CD4-positive, alpha-beta T cell (primary cell): ENCODE measurements at regions of chr1 and their contacts with region 1.

Region 1: DNA sequence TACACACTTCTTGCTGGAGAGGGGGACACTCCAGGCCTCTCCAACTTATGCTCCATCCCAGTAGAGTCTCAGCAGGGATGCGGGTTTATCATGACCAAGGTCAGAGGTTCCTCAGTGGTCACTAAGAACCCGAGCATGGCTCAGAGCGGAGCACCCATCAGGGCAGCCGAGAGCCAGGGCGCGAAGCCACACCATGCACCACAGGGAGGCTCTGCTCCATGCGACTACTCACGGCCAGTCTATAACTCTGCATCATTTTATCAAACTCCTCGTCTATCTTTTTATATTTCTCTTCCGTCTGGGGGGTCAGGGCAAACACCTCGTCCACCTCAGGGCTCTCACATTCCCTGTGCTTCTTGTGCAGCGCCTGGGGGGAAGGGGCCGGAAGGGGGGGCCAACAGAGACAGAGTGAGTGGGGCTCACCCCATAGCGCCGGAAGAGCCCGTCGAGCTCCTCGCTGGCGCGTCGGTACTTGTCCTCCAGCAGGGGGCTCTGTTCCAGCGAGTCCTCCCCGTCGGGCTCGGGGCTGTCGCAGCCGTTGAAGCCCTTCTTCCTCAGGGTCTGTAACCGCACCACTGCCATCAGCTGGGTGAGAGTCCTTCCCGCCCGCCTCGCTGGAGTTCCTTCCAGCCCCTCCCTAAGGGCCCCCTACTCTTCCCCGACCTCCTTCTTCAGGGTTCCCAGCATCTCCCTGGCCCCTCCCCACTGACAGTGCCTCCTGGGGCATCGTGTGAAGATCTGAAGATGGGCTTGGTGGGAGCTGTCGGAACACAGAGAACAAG is 20.0 kb downstream of the MEF2D start:
- DNase-seq: peak; percentile 67 to 89 (median 77)
- ATAC-seq: peak; percentile 86
- H3K4me3 ChIP-seq: no peak overlapping the region
- H3K4me3 Mint-ChIP-seq: peak overlapping the region; percentile 42
- H3K27ac ChIP-seq: peak overlapping the region; percentile 52 to 62
- H3K27ac Mint-ChIP-seq: peak overlapping the region; percentile 94
- H3K4me1 ChIP-seq: peaks cover 47% of the 10 kb centered on the region
- H3K4me1 Mint-ChIP-seq: peaks cover 53% of the 10 kb centered on the region
- H3K27me3 ChIP-seq: no peaks in the 10 kb centered on the region
- H3K27me3 Mint-ChIP-seq: no peaks in the 10 kb centered on the region
- CTCF ChIP-seq: peak; percentile 75

Region 2: GRCh38 chr1:156282479-156283222 is 198.0 kb before region 1 on chr1 and contains the start of gene SMG5:
- CTCF ChIA-PET with region 1: no interaction called
- POLR2A ChIA-PET with region 1: no interaction called
- intact Hi-C with region 1: no loop called
- DNase-seq: peak; percentile 90 to 99 (median 94)
- ATAC-seq: peak; percentile 94
- H3K4me3 ChIP-seq: peak within 1 kb of the TSS; percentile 79
- H3K4me3 Mint-ChIP-seq: peak within 1 kb of the TSS; percentile 97
- H3K27ac ChIP-seq: peak within 1 kb of the TSS; percentile 82
- H3K27ac Mint-ChIP-seq: peak within 1 kb of the TSS; percentile 86
- H3K4me1 ChIP-seq: peaks cover 36% of the 10 kb centered on the region
- H3K4me1 Mint-ChIP-seq: peaks cover 47% of the 10 kb centered on the region
- H3K27me3 ChIP-seq: no peaks in the 10 kb centered on the region
- H3K27me3 Mint-ChIP-seq: no peaks in the 10 kb centered on the region
- CTCF ChIP-seq: no peak
- total RNA-seq, gene SMG5: 51.6 to 56.1 TPM

Region 3: GRCh38 chr1:156407344-156407743 is 73.3 kb before region 1 on chr1:
- CTCF ChIA-PET with region 1: no interaction called
- POLR2A ChIA-PET with region 1: no interaction called
- intact Hi-C with region 1: no loop called
- DNase-seq: no peak
- ATAC-seq: no peak
- H3K4me3 ChIP-seq: no peak overlapping the region
- H3K4me3 Mint-ChIP-seq: no peak overlapping the region
- H3K27ac ChIP-seq: no peak overlapping the region
- H3K27ac Mint-ChIP-seq: no peak overlapping the region
- H3K4me1 ChIP-seq: no peaks in the 10 kb centered on the region
- H3K4me1 Mint-ChIP-seq: no peaks in the 10 kb centered on the region
- H3K27me3 ChIP-seq: peaks cover 12 to 38% of the 10 kb centered on the region in 2 experiments
- H3K27me3 Mint-ChIP-seq: peaks cover 86% of the 10 kb centered on the region
- CTCF ChIP-seq: no peak

Region 4: GRCh38 chr1:156456622-156457465 is 23.8 kb before region 1 on chr1:
- CTCF ChIA-PET with region 1: interaction called, 24 read pairs
- POLR2A ChIA-PET with region 1: interaction called, 11 read pairs
- intact Hi-C with region 1: loop called in 1 of 2 experiments (anchors 2 kb)
- DNase-seq: peak; percentile 93 to 99 (median 96)
- ATAC-seq: peak; percentile 80
- H3K4me3 ChIP-seq: peak overlapping the region; percentile 56
- H3K4me3 Mint-ChIP-seq: peak overlapping the region; percentile 94
- H3K27ac ChIP-seq: peak overlapping the region; percentile 93 to 100
- H3K27ac Mint-ChIP-seq: peak overlapping the region; percentile 100
- H3K4me1 ChIP-seq: peaks cover 19% of the 10 kb centered on the region
- H3K4me1 Mint-ChIP-seq: peaks cover 25% of the 10 kb centered on the region
- H3K27me3 ChIP-seq: no peaks in the 10 kb centered on the region
- H3K27me3 Mint-ChIP-seq: no peaks in the 10 kb centered on the region
- CTCF ChIP-seq: no peak

Region 5: GRCh38 chr1:156524481-156524869 is 43.9 kb after region 1 on chr1:
- CTCF ChIA-PET with region 1: interaction called, 21 read pairs
- POLR2A ChIA-PET with region 1: interaction called, 4 read pairs
- intact Hi-C with region 1: no loop called
- DNase-seq: peak in 3 of 14 experiments; percentile 47 to 53 (median 49)
- ATAC-seq: peak; percentile 71
- H3K4me3 ChIP-seq: no peak overlapping the region
- H3K4me3 Mint-ChIP-seq: peak overlapping the region; percentile 62
- H3K27ac ChIP-seq: no peak overlapping the region
- H3K27ac Mint-ChIP-seq: peak overlapping the region; percentile 6
- H3K4me1 ChIP-seq: peaks cover 33% of the 10 kb centered on the region
- H3K4me1 Mint-ChIP-seq: peaks cover 38% of the 10 kb centered on the region
- H3K27me3 ChIP-seq: no peaks in the 10 kb centered on the region
- H3K27me3 Mint-ChIP-seq: no peaks in the 10 kb centered on the region
- CTCF ChIP-seq: no peak

Region 6: GRCh38 chr1:156540791-156541383 is 60.3 kb after region 1 on chr1:
- CTCF ChIA-PET with region 1: no interaction called
- POLR2A ChIA-PET with region 1: no interaction called
- intact Hi-C with region 1: loop called in 1 of 2 experiments (anchors 10 kb)
- DNase-seq: no peak
- ATAC-seq: no peak
- H3K4me3 ChIP-seq: no peak overlapping the region
- H3K4me3 Mint-ChIP-seq: no peak overlapping the region
- H3K27ac ChIP-seq: no peak overlapping the region
- H3K27ac Mint-ChIP-seq: no peak overlapping the region
- H3K4me1 ChIP-seq: no peaks in the 10 kb centered on the region
- H3K4me1 Mint-ChIP-seq: no peaks in the 10 kb centered on the region
- H3K27me3 ChIP-seq: no peaks in the 10 kb centered on the region
- H3K27me3 Mint-ChIP-seq: no peaks in the 10 kb centered on the region
- CTCF ChIP-seq: no peak

Region 7: GRCh38 chr1:156583821-156584622 is 103.4 kb after region 1 on chr1:
- CTCF ChIA-PET with region 1: interaction called, 4 read pairs
- POLR2A ChIA-PET with region 1: interaction called, 10 read pairs
- intact Hi-C with region 1: loop called in 1 of 2 experiments (anchors 5 kb)
- DNase-seq: peak; percentile 44 to 90 (median 69)
- ATAC-seq: peak; percentile 63
- H3K4me3 ChIP-seq: no peak overlapping the region
- H3K4me3 Mint-ChIP-seq: peak overlapping the region; percentile 63
- H3K27ac ChIP-seq: no peak overlapping the region
- H3K27ac Mint-ChIP-seq: peak overlapping the region; percentile 90
- H3K4me1 ChIP-seq: peaks cover 32% of the 10 kb centered on the region
- H3K4me1 Mint-ChIP-seq: peaks cover 33% of the 10 kb centered on the region
- H3K27me3 ChIP-seq: no peaks in the 10 kb centered on the region
- H3K27me3 Mint-ChIP-seq: no peaks in the 10 kb centered on the region
- CTCF ChIP-seq: peak; percentile 85

Region 8: DNA sequence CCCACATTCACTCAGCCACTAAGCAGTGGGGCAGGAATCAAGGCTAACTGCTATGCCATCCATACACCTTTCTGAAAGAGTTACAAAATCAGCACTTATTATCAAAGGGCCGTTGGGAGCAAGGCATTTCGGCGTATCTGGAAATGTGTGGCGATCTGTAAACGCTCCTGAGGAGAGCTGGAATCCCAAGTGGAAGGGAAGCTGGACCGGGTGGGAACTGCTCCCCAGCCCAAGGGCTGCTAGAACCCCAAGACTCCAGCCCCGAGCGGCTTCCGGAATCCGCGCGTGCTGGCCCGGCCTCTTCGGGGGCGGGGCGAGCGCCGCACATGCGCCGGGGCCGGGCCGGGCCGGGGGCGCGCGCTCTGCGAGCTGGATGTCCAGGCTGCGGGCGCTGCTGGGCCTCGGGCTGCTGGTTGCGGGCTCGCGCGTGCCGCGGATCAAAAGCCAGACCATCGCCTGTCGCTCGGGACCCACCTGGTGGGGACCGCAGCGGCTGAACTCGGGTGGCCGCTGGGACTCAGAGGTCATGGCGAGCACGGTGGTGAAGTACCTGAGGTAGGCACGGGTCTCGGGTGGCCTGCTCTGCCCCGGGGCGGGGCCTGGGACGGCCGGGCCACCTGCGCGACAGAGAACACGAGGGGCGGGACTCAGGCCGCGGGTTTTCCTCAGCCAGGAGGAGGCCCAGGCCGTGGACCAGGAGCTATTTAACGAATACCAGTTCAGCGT is 111.0 kb after region 1 on chr1 and contains the start of gene NAXE:
- CTCF ChIA-PET with region 1: interaction called, 12 read pairs
- POLR2A ChIA-PET with region 1: interaction called, 9 read pairs
- intact Hi-C with region 1: no loop called
- DNase-seq: peak; percentile 43 to 87 (median 66)
- ATAC-seq: peak; percentile 96
- H3K4me3 ChIP-seq: peak within 1 kb of the TSS; percentile 78
- H3K4me3 Mint-ChIP-seq: peak within 1 kb of the TSS; percentile 90
- H3K27ac ChIP-seq: peak within 1 kb of the TSS; percentile 37 to 40
- H3K27ac Mint-ChIP-seq: peak within 1 kb of the TSS; percentile 89
- H3K4me1 ChIP-seq: peaks cover 26% of the 10 kb centered on the region
- H3K4me1 Mint-ChIP-seq: peaks cover 28% of the 10 kb centered on the region
- H3K27me3 ChIP-seq: no peaks in the 10 kb centered on the region
- H3K27me3 Mint-ChIP-seq: no peaks in the 10 kb centered on the region
- CTCF ChIP-seq: no peak
- total RNA-seq, gene NAXE: 23.3 to 27.8 TPM

Region 9: DNA sequence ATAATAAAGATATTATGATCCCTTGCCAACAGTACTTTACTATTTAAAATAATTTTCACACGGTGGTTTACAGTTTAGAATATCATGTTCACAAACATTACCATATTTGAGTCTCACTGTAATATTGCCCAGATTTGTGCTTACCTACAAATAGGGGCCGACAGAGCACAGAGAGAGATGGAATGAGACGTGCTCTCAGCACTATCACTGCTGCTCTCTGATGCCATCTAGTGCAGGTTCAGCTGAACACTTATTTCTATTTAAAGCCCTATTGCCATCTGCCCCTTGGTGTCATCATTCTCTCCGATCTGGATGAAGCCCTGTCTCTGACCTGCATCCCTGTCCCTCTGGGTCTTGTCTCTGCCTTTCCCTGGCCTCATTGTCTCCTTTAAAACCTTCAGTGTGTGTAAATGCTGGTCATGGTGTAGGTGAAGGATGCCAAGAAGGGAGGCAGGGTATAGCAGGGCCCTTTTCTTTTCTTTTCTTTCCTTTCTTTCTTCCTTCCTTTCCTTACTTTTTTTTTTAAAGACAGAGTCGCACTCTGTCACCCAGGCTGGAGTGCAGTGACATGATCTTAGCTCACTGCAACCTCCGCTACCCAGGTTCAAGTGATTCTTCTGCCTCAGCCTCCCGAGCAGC is 127.6 kb after region 1 on chr1:
- CTCF ChIA-PET with region 1: interaction called, 9 read pairs
- POLR2A ChIA-PET with region 1: interaction called, 3 read pairs
- intact Hi-C with region 1: loop called (anchors 1 kb)
- DNase-seq: peak in 13 of 14 experiments; percentile 42 to 87 (median 53)
- ATAC-seq: peak; percentile 96
- H3K4me3 ChIP-seq: no peak overlapping the region
- H3K4me3 Mint-ChIP-seq: peak overlapping the region; percentile 72
- H3K27ac ChIP-seq: no peak overlapping the region
- H3K27ac Mint-ChIP-seq: no peak overlapping the region
- H3K4me1 ChIP-seq: peaks cover 10% of the 10 kb centered on the region
- H3K4me1 Mint-ChIP-seq: peaks cover 15% of the 10 kb centered on the region
- H3K27me3 ChIP-seq: peaks cover 0 to 5% of the 10 kb centered on the region in 2 experiments
- H3K27me3 Mint-ChIP-seq: peaks cover 21% of the 10 kb centered on the region
- CTCF ChIP-seq: peak; percentile 77